ENCODE measurements at regions of chr3 and their contacts with region 1.

Region 1: GRCh38 chr3:139302084-139302800 is 41.6 kb upstream of the MRPS22 start:
- DNase-seq: peak; percentile 91 to 97
- H3K4me3 ChIP-seq: peak overlapping the region; percentile 22; the same call in 1 of the 2 replicates
- H3K27ac ChIP-seq: peak overlapping the region; percentile 71
- H3K4me1 ChIP-seq: peaks cover 52% of the 10 kb centered on the region
- H3K27me3 ChIP-seq: no peaks in the 10 kb centered on the region
- CTCF ChIP-seq: no peak

Region 2: GRCh38 chr3:139319428-139320402 is 17.5 kb after region 1 on chr3:
- CTCF ChIA-PET with region 1: interaction called, 8 read pairs
- POLR2A ChIA-PET with region 1: interaction called, 4 read pairs
- intact Hi-C with region 1: loop called (anchors 1 kb)
- DNase-seq: no peak
- H3K4me3 ChIP-seq: no peak overlapping the region
- H3K27ac ChIP-seq: no peak overlapping the region
- H3K4me1 ChIP-seq: peaks cover 32% of the 10 kb centered on the region
- H3K27me3 ChIP-seq: no peaks in the 10 kb centered on the region
- CTCF ChIP-seq: peak; percentile 40; the same call in 1 of the 2 replicates

Measured in PC-9 (cell line).